ENCODE measurements at regions of chr10 and their contacts with region 1.

Region 1: DNA sequence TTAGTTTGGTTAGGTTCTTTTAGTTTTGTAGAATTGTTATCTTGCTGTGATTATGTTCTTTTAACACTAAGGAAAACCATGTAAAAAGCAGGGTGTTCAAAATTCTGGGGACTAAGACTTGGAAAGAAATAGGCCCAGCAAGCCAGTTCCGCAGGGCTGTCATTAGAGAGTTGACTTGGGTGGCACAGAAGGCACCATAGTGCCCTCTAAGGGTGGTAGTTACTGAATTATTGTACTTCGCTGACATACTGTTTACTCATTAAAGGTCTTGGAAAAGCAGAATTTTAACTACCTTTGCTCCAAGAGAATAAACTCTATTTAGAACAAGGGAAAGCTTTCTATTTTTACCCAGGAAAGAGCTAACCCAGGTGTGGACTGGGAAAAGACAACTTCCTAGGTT is 86.5 kb downstream of the OTUD1 start:
- DNase-seq: no peak

Region 2: GRCh38 chr10:22148961-22149360 is 1376.4 kb before region 1 on chr10:
- intact Hi-C with region 1: loop called in 1 of 2 experiments (anchors 10 kb)
- DNase-seq: no peak

Region 3: DNA sequence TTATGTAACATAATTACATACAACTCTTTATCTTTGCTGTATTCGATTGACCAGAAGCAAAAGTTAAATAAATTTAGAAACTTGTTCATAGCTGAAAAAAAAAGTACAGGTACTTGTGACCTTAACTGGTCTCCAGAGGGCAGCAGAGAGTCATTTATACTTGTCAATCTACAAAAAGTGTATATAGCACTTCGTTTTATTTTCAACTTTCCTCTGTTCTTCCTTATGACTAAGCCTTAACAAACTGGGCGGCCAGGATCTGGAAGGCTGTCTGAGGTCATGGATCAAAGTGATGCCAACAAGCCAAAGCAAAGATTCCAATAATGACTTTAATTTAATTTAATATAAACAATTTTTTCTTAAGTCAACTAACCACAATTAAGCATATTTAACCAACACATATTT is 210.6 kb before region 1 on chr10:
- intact Hi-C with region 1: loop called (anchors 10 kb)
- DNase-seq: no peak

Region 4: GRCh38 chr10:23370106-23370505 is 155.3 kb before region 1 on chr10:
- intact Hi-C with region 1: no loop called
- DNase-seq: no peak

Region 5: GRCh38 chr10:23499372-23500132 is 25.9 kb before region 1 on chr10:
- intact Hi-C with region 1: loop called in 1 of 2 experiments (anchors 2 kb)
- DNase-seq: no peak

Region 6: DNA sequence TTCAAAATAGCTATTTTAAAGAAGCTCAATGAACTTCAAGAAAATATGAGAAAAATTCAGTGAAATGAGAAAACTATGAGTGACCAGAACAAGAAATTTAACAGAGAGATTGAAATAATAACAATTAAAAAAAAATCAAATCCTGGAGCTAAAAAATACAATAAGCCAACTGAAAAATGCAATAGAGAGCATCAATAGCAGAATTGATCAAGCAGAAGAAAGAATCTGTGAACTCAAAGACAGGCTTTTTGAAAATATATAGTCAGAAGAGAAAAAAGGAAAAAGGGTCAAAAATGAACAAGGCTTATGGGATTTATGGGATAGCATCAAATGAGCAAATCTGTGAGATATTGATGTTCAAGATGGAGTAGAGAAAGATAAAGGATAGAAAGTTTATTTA is 46.5 kb after region 1 on chr10:
- intact Hi-C with region 1: no loop called
- DNase-seq: no peak